SK-N-SH (cell line): ENCODE measurements at regions of chr11 and their contacts with region 1.

Region 1: GRCh38 chr11:304915-305843 is 2.4 kb upstream of the IFITM2 start:
- DNase-seq: peak; percentile 82
- H3K4me3 ChIP-seq: no peak overlapping the region
- H3K27ac ChIP-seq: no peak overlapping the region
- H3K4me1 ChIP-seq: peaks cover 5 to 6% of the 10 kb centered on the region in 2 experiments; a peak in 1 of 4 replicates
- H3K27me3 ChIP-seq: no peaks in the 10 kb centered on the region
- CTCF ChIP-seq: peak; percentile 68
- EP300 ChIP-seq: no peak
- RAD21 ChIP-seq: peak; percentile 69

Region 2: DNA sequence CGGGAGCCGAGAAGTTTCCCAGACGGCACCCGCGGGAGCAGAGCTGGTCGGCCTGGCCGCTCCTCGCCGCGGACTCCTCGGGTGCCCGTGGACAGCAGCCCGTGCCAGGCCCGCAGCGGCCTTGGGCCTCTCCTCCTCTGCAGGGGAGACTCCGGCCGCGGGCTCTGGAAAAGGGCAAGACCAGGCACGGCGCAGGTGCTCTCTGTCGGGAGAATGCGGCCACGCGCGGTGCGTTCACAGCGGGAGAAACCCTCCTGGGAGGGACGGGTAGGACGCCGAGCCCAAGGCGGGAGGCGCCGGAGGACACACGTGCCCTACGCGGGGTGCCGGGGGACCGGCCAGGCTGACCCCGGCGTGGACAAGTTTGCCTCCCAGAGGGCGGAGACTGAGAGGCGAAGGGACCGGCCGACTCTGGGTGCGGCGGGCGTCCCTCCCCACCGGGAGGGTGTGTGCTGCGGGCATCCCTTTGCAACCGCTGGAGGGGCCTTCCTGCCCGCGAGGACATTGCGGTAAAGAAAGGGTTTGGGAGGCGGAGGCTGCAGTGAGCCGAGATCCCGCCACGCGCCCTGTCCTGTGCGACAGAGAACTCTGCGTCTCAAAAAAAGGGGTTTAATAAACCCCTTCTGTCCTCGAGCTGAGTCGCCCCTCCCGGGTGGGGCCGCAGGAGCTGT is 11.0 kb after region 1 on chr11:
- CTCF ChIA-PET with region 1: interaction called, 20 read pairs
- POLR2A ChIA-PET with region 1: no interaction called
- DNase-seq: peak; percentile 43
- H3K4me3 ChIP-seq: no peak overlapping the region
- H3K27ac ChIP-seq: no peak overlapping the region
- H3K4me1 ChIP-seq: peaks cover 4 to 9% of the 10 kb centered on the region in 2 experiments; a peak in 2 of 4 replicates
- H3K27me3 ChIP-seq: no peaks in the 10 kb centered on the region
- CTCF ChIP-seq: no peak
- EP300 ChIP-seq: no peak
- RAD21 ChIP-seq: no peak

Region 3: GRCh38 chr11:363948-364761 is 59.0 kb after region 1 on chr11:
- CTCF ChIA-PET with region 1: interaction called, 24 read pairs
- POLR2A ChIA-PET with region 1: no interaction called
- DNase-seq: peak; percentile 85
- H3K4me3 ChIP-seq: no peak overlapping the region
- H3K27ac ChIP-seq: no peak overlapping the region
- H3K4me1 ChIP-seq: peaks cover 0 to 12% of the 10 kb centered on the region in 2 experiments; a peak in 1 of 4 replicates
- H3K27me3 ChIP-seq: no peaks in the 10 kb centered on the region
- CTCF ChIP-seq: peak; percentile 59
- EP300 ChIP-seq: no peak
- RAD21 ChIP-seq: no peak; the same call in 1 of the 2 replicates